Heart right ventricle (tissue), 16 donors: ENCODE measurements at regions of chr3 and their contacts with region 1.

Region 1: GRCh38 chr3:194682694-194683310 is 2.9 kb upstream of the FAM43A start:
- DNase-seq: peak; percentile 40 to 83
- ATAC-seq: peak; percentile 19 to 74 (median 62)
- H3K4me3 ChIP-seq: no peak overlapping the region
- H3K27ac ChIP-seq: peak overlapping the region in 6 of 10 donors; percentile 12 to 54 (median 41)
- H3K4me1 ChIP-seq: peaks cover 10 to 39% (median 29%) of the 10 kb centered on the region in 9 donors
- H3K27me3 ChIP-seq: no peaks in the 10 kb centered on the region
- CTCF ChIP-seq: peak; percentile 67 to 96 (median 91)

Region 2: GRCh38 chr3:194556086-194557056 is 126.4 kb before region 1 on chr3:
- intact Hi-C with region 1: no loop called
- DNase-seq: no peak
- ATAC-seq: peak in 5 of 8 donors; percentile 24 to 44 (median 29)
- H3K4me3 ChIP-seq: peak overlapping the region in 4 of 10 donors; percentile 14 to 35 (median 16)
- H3K27ac ChIP-seq: peak overlapping the region in 1 of 10 donors; percentile 48
- H3K4me1 ChIP-seq: peaks cover 0 to 32% (median 11%) of the 10 kb centered on the region in 9 donors
- H3K27me3 ChIP-seq: no peaks in the 10 kb centered on the region
- CTCF ChIP-seq: no peak

Region 3: DNA sequence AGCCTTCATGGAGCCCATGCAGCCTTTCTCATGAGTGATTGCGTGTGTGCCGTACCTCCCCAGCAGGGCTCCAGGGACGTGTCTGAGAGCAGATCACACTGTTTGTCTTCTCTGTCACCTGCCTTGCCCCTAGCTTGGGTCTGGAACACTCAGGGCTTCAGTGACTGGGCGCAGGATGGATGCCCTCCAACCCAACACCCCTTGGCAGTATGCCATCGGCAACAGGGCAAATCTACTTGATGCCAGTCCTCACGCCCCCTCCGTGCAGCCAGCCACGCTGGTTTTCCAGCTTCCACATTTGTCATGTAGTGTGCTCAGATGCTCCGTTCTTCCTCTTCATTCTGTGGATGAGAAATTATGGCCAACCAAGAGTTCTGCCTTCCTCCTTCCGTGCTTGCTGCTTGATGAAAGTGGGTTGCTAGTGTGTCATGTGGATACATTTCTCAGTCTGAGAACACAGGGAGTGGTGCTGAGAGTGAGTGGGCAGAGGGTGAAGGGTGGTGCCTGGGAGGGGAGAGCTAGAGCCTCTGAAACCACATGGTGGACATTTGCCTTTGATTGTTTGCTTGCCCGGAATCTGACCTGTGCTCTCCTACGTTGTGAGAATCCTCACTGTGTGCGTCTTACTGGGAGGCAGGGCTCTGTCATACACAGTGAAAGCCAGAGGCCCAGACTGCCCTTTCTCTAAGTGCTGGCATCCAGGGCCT is 100.0 kb after region 1 on chr3:
- intact Hi-C with region 1: loop called in 2 of 10 experiments (anchors 5 kb)
- DNase-seq: no peak
- ATAC-seq: peak in 5 of 8 donors; percentile 36 to 68 (median 50)
- H3K4me3 ChIP-seq: no peak overlapping the region
- H3K27ac ChIP-seq: peak overlapping the region in 6 of 10 donors; percentile 7 to 63 (median 37)
- H3K4me1 ChIP-seq: peaks cover 11 to 46% (median 30%) of the 10 kb centered on the region in 9 donors
- H3K27me3 ChIP-seq: no peaks in the 10 kb centered on the region
- CTCF ChIP-seq: no peak

Region 4: GRCh38 chr3:194930377-194931204 is 247.8 kb after region 1 on chr3:
- intact Hi-C with region 1: loop called in 1 of 10 experiments (anchors 5 kb)
- DNase-seq: peak in 1 of 2 donors; percentile 61
- ATAC-seq: peak; percentile 66 to 89 (median 84)
- H3K4me3 ChIP-seq: no peak overlapping the region
- H3K27ac ChIP-seq: peak overlapping the region; percentile 42 to 84 (median 80)
- H3K4me1 ChIP-seq: peaks cover 19 to 67% (median 48%) of the 10 kb centered on the region in 9 donors
- H3K27me3 ChIP-seq: no peaks in the 10 kb centered on the region
- CTCF ChIP-seq: no peak

Region 5: DNA sequence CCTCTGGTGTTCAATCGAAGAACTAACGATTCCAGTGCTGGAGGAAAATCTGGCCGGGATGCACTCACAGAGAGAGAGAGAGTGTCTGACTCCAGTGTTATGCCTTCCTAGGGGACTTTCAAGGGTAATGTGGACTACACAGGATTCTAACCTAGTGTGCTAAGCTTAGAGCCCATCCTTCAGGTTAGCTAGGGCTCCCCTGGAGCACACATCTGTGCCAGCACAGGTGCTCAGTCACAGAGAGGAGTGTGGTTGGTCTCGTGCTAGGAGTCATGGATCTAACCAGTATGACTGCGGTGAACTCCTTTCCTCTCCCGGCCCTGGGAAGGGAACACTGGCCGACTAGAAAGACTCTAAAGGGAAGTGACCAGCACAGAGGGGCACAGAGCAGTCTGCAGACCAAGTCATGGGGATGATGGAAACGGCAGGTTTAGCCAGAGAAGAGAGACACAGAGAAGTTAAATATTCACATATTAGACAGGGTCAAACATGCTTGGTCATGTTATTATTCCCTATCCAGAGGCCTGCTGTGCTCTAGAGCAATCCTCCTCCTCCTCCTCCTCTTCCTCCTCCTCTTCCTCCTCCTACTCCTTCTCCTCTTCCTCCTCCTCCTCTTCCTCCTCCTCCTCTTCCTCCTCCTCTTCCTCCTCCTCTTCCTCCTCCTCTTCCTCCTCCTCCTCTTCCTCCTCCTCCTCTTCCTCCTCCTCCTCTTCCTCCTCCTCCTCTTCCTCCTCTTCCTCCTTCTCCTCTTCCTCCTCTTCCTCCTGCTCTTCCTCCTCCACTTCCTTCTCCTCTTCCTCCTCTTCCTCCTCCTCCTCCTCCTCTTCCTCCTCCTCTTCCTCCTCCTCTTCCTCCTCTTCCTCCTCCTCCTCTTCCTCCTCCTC is 307.9 kb after region 1 on chr3:
- intact Hi-C with region 1: loop called in 7 of 10 experiments (anchors 2 to 10 kb)
- DNase-seq: no peak
- ATAC-seq: no peak
- H3K4me3 ChIP-seq: no peak overlapping the region
- H3K27ac ChIP-seq: no peak overlapping the region
- H3K4me1 ChIP-seq: peaks cover 0 to 11% (median 0%) of the 10 kb centered on the region in 9 donors
- H3K27me3 ChIP-seq: no peaks in the 10 kb centered on the region
- CTCF ChIP-seq: no peak

Region 6: DNA sequence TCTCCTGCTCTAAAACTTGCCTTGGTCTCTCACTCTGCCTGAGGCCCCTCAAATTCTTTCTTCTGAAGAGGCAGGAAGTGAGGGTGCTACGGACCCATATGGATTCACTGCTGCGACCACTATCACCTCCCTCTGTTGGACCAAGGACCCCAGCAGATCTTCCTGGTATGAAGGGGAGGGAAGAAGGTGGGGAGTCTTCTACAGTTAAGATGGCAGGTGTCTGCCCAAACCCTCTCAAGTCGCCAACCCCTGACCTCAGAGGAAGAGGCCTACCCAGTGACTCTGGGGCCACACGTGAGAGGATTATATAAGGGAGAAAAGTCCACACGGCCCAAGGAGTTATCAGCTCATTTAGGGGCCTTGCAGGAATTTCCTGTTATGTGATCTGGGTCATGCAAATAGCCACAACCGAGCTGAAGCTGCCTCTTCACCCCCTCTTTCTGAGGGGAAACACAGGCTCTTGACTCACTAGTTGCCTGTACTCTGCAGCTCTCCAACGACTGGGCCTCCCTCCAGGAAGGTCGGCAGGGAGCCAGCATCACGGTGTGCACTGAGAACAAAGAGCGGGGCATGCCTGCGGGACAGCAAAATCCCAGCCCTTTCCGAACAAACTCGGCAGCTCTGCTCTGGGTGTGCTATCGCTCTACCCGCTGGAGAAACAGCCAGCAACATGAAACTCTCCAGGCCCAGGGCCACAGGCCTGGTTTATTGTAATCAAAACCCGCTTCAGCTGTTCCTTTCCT is 472.2 kb after region 1 on chr3:
- intact Hi-C with region 1: loop called in 1 of 10 experiments (anchors 5 kb)
- DNase-seq: peak; percentile 91 to 94
- ATAC-seq: peak; percentile 46 to 85 (median 79)
- H3K4me3 ChIP-seq: no peak overlapping the region
- H3K27ac ChIP-seq: peak overlapping the region; percentile 52 to 92 (median 84)
- H3K4me1 ChIP-seq: peaks cover 36 to 93% (median 73%) of the 10 kb centered on the region in 9 donors
- H3K27me3 ChIP-seq: no peaks in the 10 kb centered on the region
- CTCF ChIP-seq: no peak